H1 (cell line): ENCODE measurements at regions of chr2 and their contacts with region 1.

Region 1: GRCh38 chr2:182650704-182651103 is 65.4 kb upstream of the DNAJC10 start:
- DNase-seq: no peak
- H3K4me3 ChIP-seq: no peak overlapping the region
- H3K27ac ChIP-seq: no peak overlapping the region
- H3K4me1 ChIP-seq: peaks cover 0 to 3% (median 0%) of the 10 kb centered on the region in 4 experiments; a peak in 1 of 7 replicates
- H3K27me3 ChIP-seq: no peaks in the 10 kb centered on the region
- CTCF ChIP-seq: peak in 2 of 3 experiments; percentile 27 to 29; a peak in 2 of 4 replicates
- EP300 ChIP-seq: no peak
- POLR2A ChIP-seq: no peak
- RAD21 ChIP-seq: peak; percentile 60 to 61

Region 2: GRCh38 chr2:182179176-182179575 is 471.5 kb before region 1 on chr2:
- CTCF ChIA-PET with region 1: interaction called, 93 read pairs
- POLR2A ChIA-PET with region 1: no interaction called
- DNase-seq: no peak
- H3K4me3 ChIP-seq: no peak overlapping the region
- H3K27ac ChIP-seq: no peak overlapping the region
- H3K4me1 ChIP-seq: no peaks in the 10 kb centered on the region
- H3K27me3 ChIP-seq: no peaks in the 10 kb centered on the region
- CTCF ChIP-seq: no peak
- EP300 ChIP-seq: no peak
- POLR2A ChIP-seq: no peak
- RAD21 ChIP-seq: no peak

Region 3: GRCh38 chr2:182193291-182193690 is 457.4 kb before region 1 on chr2:
- CTCF ChIA-PET with region 1: interaction called, 93 read pairs
- POLR2A ChIA-PET with region 1: no interaction called
- DNase-seq: no peak
- H3K4me3 ChIP-seq: no peak overlapping the region
- H3K27ac ChIP-seq: no peak overlapping the region
- H3K4me1 ChIP-seq: no peaks in the 10 kb centered on the region
- H3K27me3 ChIP-seq: peaks cover 0 to 1% (median 0%) of the 10 kb centered on the region in 4 experiments; a peak in 1 of 7 replicates
- CTCF ChIP-seq: no peak
- EP300 ChIP-seq: no peak
- POLR2A ChIP-seq: no peak
- RAD21 ChIP-seq: no peak

Region 4: DNA sequence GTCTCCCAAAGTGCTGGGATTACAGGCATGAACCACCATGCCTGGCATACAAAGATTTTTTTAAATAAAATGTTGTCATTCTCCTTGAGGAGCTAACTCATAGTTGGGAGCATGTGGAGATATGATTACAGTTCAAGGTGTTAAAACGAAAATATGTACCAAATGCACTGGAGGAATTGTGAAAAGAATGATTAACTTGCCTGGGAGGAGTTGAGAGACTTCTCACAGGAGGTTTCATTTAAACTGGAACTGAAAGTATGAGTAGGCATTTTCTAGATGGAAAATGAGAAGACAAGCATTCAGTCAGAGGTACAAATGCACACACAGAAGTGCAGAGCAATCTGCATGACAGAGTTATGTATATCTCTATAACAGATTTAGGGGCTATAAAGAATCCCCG is 97.2 kb before region 1 on chr2:
- CTCF ChIA-PET with region 1: interaction called, 16 read pairs
- POLR2A ChIA-PET with region 1: no interaction called
- DNase-seq: no peak
- H3K4me3 ChIP-seq: no peak overlapping the region
- H3K27ac ChIP-seq: no peak overlapping the region
- H3K4me1 ChIP-seq: no peaks in the 10 kb centered on the region
- H3K27me3 ChIP-seq: no peaks in the 10 kb centered on the region
- CTCF ChIP-seq: no peak
- EP300 ChIP-seq: no peak
- POLR2A ChIP-seq: no peak
- RAD21 ChIP-seq: no peak

Region 5: GRCh38 chr2:182595650-182596049 is 55.1 kb before region 1 on chr2:
- CTCF ChIA-PET with region 1: interaction called, 10 read pairs
- POLR2A ChIA-PET with region 1: no interaction called
- DNase-seq: no peak
- H3K4me3 ChIP-seq: no peak overlapping the region
- H3K27ac ChIP-seq: no peak overlapping the region
- H3K4me1 ChIP-seq: peaks cover 0 to 9% (median 4%) of the 10 kb centered on the region in 4 experiments; a peak in 5 of 7 replicates
- H3K27me3 ChIP-seq: no peaks in the 10 kb centered on the region
- CTCF ChIP-seq: no peak
- EP300 ChIP-seq: no peak
- POLR2A ChIP-seq: no peak
- RAD21 ChIP-seq: no peak

Region 6: GRCh38 chr2:182616471-182617393 is 34.0 kb before region 1 on chr2:
- CTCF ChIA-PET with region 1: interaction called, 10 read pairs
- POLR2A ChIA-PET with region 1: interaction called, 4 read pairs
- DNase-seq: no peak
- H3K4me3 ChIP-seq: no peak overlapping the region
- H3K27ac ChIP-seq: no peak overlapping the region
- H3K4me1 ChIP-seq: peaks cover 0 to 5% (median 1%) of the 10 kb centered on the region in 4 experiments; a peak in 1 of 7 replicates
- H3K27me3 ChIP-seq: no peaks in the 10 kb centered on the region
- CTCF ChIP-seq: no peak
- EP300 ChIP-seq: no peak
- POLR2A ChIP-seq: no peak
- RAD21 ChIP-seq: no peak

Region 7: DNA sequence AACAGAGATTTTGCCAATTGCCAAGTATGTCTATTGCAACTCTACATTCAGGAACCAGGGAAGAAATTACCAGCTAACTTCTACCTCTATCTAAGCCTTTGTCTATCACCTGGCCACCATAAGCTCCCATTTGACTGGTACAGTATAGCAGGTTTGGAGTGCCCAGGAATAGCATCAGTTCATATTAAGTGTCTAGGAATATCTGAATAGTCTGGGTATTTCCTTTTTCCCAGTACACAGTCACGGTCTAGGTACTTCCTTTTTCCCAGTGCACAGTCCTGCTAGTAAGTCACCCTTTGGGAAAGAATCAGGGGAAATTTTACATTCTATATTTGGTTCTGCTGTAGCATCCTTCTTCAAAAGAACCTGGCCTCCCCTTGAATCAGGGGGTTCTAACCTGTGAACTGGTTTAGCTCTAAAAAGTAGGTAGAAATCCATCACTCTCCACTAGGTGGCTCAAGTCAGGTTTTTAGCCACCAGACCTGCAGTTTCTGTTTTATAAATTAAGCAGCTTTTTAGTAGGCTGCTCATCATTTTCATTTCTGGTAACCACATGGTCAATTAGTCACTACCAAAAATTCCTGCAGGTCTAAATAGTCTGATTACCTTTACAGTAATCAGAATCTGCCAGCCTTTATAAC is 16.1 kb after region 1 on chr2:
- CTCF ChIA-PET with region 1: interaction called, 11 read pairs
- POLR2A ChIA-PET with region 1: no interaction called
- DNase-seq: no peak
- H3K4me3 ChIP-seq: no peak overlapping the region
- H3K27ac ChIP-seq: no peak overlapping the region
- H3K4me1 ChIP-seq: no peaks in the 10 kb centered on the region
- H3K27me3 ChIP-seq: no peaks in the 10 kb centered on the region
- CTCF ChIP-seq: peak in 2 of 3 experiments; percentile 37 to 55; a peak in 2 of 4 replicates
- EP300 ChIP-seq: no peak
- POLR2A ChIP-seq: no peak
- RAD21 ChIP-seq: peak; percentile 38 to 46